ENCODE measurements at regions of chr17 and their contacts with region 1.

Region 1: DNA sequence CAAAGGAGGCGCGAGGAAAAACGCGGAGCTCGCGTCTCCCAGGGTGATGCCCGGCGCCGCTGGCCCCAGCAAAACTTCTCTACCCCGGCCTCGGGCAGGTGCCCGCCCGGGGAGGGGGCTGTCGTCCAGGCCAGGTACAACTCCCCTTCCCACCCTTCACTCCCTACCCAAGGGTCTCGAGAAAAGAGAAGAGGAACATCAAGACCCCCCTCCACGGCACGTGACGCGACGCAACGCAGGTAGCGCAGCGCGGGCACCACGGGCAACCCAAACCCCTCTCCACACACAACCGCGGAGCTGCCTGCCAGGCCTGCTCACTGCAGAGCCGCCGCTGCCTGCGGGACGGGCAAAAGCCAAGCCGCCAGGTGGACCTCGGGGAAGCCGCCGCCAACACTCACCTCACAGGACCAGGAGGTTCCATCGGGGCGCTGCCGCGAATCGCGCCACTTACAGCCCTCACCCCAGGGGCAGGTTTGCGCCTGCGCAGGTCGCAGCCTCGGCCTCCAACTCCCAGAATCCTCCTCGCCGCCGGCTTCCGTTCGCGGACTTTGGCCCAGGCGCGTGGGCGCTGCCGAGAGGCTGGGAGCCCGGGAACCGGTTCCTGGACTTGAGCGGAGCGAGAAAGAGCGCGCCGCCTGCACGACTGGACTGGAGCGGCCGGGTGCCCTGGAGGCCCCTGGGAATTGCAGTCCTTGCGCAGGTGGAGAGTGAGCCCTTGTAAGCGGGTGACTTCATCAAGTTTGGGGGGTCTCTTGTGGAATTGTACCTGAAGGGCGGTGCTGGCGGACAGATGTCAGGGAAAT is at the start of gene ZNF232:
- DNase-seq: peak; percentile 96
- H3K4me3 Mint-ChIP-seq: peak within 1 kb of the TSS; percentile 78
- H3K27ac Mint-ChIP-seq: peak within 1 kb of the TSS; percentile 35
- H3K4me1 Mint-ChIP-seq: peaks cover 27% of the 10 kb centered on the region
- H3K27me3 Mint-ChIP-seq: peaks cover 14% of the 10 kb centered on the region
- total RNA-seq, gene ZNF232: 13.6 to 14.2 TPM

Region 2: DNA sequence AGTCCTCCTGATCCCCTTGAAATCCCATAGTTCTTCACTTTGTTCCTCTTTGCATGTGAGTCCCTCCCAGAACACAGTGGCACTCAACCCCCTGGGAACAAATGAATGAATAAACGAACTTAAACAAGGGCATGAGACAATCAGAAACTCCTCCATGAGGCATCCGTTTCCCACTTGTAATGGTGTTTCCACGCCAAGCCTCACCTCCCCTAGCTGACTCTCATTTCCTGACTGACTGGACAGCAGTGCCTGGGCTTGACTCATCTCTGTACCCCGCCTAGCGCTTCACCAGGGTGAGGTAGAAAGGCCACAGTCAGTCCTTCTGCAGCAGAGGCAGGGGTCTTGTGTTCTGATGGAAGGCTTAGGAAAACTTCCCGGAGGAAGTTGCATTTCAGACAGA is 99.7 kb before region 1 on chr17:
- CTCF ChIA-PET with region 1: no interaction called
- POLR2A ChIA-PET with region 1: no interaction called
- intact Hi-C with region 1: no loop called
- DNase-seq: peak; percentile 80
- H3K4me3 Mint-ChIP-seq: no peak overlapping the region
- H3K27ac Mint-ChIP-seq: peak overlapping the region; percentile 74
- H3K4me1 Mint-ChIP-seq: peaks cover 20% of the 10 kb centered on the region
- H3K27me3 Mint-ChIP-seq: no peaks in the 10 kb centered on the region

Region 3: GRCh38 chr17:5078106-5079028 is 33.2 kb before region 1 on chr17 and contains the start of gene ZFP3:
- CTCF ChIA-PET with region 1: interaction called, 7 read pairs
- POLR2A ChIA-PET with region 1: interaction called, 13 read pairs
- intact Hi-C with region 1: no loop called
- DNase-seq: peak; percentile 88
- H3K4me3 Mint-ChIP-seq: peak within 1 kb of the TSS; percentile 70
- H3K27ac Mint-ChIP-seq: peak within 1 kb of the TSS; percentile 87
- H3K4me1 Mint-ChIP-seq: peaks cover 25% of the 10 kb centered on the region
- H3K27me3 Mint-ChIP-seq: no peaks in the 10 kb centered on the region
- total RNA-seq, gene ZFP3: 1.8 to 1.9 TPM

Region 4: GRCh38 chr17:5097101-5097834 is 14.3 kb before region 1 on chr17:
- CTCF ChIA-PET with region 1: no interaction called
- POLR2A ChIA-PET with region 1: no interaction called
- intact Hi-C with region 1: no loop called
- DNase-seq: peak; percentile 33
- H3K4me3 Mint-ChIP-seq: peak overlapping the region; percentile 53
- H3K27ac Mint-ChIP-seq: no peak overlapping the region
- H3K4me1 Mint-ChIP-seq: peaks cover 7% of the 10 kb centered on the region
- H3K27me3 Mint-ChIP-seq: peaks cover 16% of the 10 kb centered on the region

Region 5: GRCh38 chr17:5155495-5155894 is 43.9 kb after region 1 on chr17:
- CTCF ChIA-PET with region 1: no interaction called
- POLR2A ChIA-PET with region 1: no interaction called
- intact Hi-C with region 1: no loop called
- DNase-seq: no peak
- H3K4me3 Mint-ChIP-seq: no peak overlapping the region
- H3K27ac Mint-ChIP-seq: no peak overlapping the region
- H3K4me1 Mint-ChIP-seq: no peaks in the 10 kb centered on the region
- H3K27me3 Mint-ChIP-seq: peaks cover 13% of the 10 kb centered on the region

Region 6: GRCh38 chr17:5191541-5192417 is 80.2 kb after region 1 on chr17 and contains the start of gene ZNF594:
- CTCF ChIA-PET with region 1: interaction called, 5 read pairs
- POLR2A ChIA-PET with region 1: interaction called, 3 read pairs
- intact Hi-C with region 1: loop called (anchors 2 kb)
- DNase-seq: peak; percentile 99
- H3K4me3 Mint-ChIP-seq: peak within 1 kb of the TSS; percentile 95
- H3K27ac Mint-ChIP-seq: peak within 1 kb of the TSS; percentile 52
- H3K4me1 Mint-ChIP-seq: peaks cover 20% of the 10 kb centered on the region
- H3K27me3 Mint-ChIP-seq: no peaks in the 10 kb centered on the region
- total RNA-seq, gene ZNF594: 5.3 to 6.2 TPM

Measured in activated CD4-positive, alpha-beta memory T cell treated with anti-CD3 and anti-CD28 coated beads for 36 hours (primary cell).